BJ (cell line): ENCODE measurements at regions of chr7 and their contacts with region 1.

Region 1: GRCh38 chr7:121395961-121396757 is at the start of gene FAM3C:
- DNase-seq: peak; percentile 41
- H3K4me3 ChIP-seq: peak within 1 kb of the TSS; percentile 83
- H3K27me3 ChIP-seq: no peaks in the 10 kb centered on the region
- CTCF ChIP-seq: peak; percentile 41
- polyA plus RNA-seq, gene FAM3C: 13.1 and 32.0 TPM in 2 replicates

Region 2: GRCh38 chr7:121366852-121367431 is 29.2 kb before region 1 on chr7:
- CTCF ChIA-PET with region 1: interaction called, 12 read pairs
- POLR2A ChIA-PET with region 1: interaction called, 3 read pairs
- DNase-seq: no peak
- H3K4me3 ChIP-seq: no peak overlapping the region
- H3K27me3 ChIP-seq: no peaks in the 10 kb centered on the region
- CTCF ChIP-seq: peak; percentile 67

Region 3: DNA sequence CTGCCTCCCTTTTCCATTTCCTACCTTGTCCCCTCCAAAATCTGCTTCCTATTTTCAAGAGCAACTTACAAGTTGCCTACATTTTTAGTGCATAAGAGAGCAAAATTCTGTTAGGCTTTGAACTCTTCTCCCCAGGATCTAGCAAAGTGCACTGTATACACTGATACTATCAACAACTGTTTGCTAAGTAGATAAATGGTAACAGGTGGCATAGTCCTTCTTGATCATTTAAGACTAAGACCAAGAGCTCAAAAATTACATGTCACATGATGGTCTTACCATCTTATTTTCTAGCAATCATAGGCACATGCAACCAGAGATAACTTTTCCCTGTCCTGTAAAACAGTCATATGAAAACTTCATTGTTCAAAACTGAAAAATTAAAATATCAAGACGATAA is 16.2 kb before region 1 on chr7:
- CTCF ChIA-PET with region 1: interaction called, 14 read pairs
- POLR2A ChIA-PET with region 1: no interaction called
- DNase-seq: no peak
- H3K4me3 ChIP-seq: no peak overlapping the region
- H3K27me3 ChIP-seq: no peaks in the 10 kb centered on the region
- CTCF ChIP-seq: no peak

Region 4: GRCh38 chr7:121385800-121386179 is 10.4 kb before region 1 on chr7:
- CTCF ChIA-PET with region 1: interaction called, 16 read pairs
- POLR2A ChIA-PET with region 1: interaction called, 3 read pairs
- DNase-seq: no peak
- H3K4me3 ChIP-seq: no peak overlapping the region
- H3K27me3 ChIP-seq: no peaks in the 10 kb centered on the region
- CTCF ChIP-seq: no peak

Region 5: DNA sequence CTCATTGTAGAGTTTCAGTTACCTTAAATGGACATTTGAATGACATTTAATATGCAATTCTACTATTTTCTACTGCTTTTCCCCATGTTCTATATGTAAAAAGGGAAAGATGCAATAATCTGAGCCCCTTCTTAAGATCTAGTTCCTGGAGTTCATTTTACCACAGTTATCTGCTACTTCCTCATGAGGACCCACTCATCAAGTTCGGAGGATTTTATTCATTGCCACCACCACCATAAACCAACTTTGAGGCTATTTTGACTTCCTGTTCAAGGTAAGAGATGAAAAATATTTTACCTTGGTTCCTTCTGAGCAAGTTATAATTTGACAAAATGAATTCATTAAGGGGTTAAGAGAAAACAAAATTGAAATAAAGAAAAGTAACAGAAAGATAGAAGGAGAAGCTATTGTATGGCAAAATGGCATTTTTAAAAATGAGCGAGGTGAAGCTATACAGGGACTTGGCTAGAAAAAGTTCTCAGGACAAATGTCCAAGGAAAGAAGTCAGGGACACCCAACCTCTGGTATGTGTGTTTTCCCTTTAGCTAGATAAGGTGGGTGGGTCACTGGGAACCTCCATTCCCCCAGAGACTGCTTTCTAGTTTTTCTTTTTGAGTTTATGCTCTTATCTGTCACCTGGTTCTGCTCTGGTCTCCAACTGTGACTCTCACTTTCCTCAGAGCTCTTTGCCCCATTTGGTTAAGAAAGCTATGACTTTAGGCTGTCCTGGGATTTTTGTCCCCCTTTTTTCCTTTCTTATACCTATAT is 14.9 kb after region 1 on chr7:
- CTCF ChIA-PET with region 1: interaction called, 10 read pairs
- POLR2A ChIA-PET with region 1: interaction called, 7 read pairs
- DNase-seq: no peak
- H3K4me3 ChIP-seq: no peak overlapping the region
- H3K27me3 ChIP-seq: peaks cover 4% of the 10 kb centered on the region
- CTCF ChIP-seq: no peak

Region 6: DNA sequence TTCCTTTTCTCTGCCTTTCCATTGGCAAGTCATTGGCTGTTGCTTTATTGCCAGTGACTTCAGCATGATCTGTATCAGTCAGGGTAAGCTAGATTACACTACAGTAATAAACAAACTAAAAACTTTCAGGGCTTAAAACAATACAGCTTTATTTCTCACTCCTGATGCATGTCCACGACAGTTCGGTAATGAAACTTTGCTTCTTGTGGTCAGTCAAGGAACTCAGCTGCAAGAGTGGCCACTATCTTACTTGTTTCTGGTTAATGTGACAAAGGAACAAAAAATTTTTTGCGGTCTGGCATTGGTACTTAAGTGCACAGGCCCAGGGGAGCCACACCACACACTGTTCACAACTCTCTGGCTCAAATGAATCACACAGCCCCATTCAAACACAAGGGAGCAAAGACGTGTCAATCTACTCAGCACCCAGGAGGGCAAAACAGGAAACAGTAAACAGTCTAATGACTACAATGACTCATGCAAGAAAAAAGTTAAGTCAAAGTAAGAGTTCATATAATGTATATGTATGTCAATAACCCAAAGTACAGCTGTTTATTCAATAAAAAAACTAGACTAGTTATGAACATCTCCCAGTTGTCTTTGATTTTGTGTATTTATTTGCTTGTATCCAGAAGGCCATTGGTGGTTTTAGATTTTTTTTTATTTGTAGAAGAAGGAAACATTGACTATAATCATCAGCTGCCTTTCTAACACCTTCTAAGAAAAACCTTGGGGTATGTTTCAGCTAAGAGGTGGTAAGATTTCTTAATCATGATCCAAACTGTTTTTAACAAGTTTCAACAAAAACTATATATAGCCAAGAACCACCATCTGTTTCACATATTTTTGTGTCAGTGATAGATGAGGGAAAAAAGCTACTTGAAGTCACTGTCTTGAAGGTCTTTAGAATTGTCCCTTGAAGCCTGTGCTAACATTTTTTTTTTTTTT is 134.3 kb after region 1 on chr7:
- CTCF ChIA-PET with region 1: interaction called, 11 read pairs
- POLR2A ChIA-PET with region 1: no interaction called
- DNase-seq: peak; percentile 78
- H3K4me3 ChIP-seq: no peak overlapping the region
- H3K27me3 ChIP-seq: peaks cover 2% of the 10 kb centered on the region
- CTCF ChIP-seq: no peak

Region 7: DNA sequence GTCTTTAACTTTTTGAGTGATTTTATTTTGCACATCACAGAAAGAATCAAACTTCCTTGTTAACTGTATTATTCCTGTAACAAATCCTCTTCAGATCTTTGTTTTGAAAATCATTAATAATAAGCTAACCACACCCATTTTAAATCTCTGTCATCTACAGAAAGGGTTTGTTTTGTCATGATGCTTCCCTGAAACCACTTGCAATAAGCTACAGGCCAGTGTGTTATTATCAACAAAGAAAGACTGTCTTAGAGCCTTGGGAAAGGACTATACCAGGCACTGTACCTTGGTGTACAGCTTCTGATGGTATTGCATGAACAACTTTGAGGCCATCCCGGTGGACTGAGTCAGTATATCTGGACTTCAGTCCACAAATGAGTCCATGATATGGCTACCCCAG is 145.3 kb after region 1 on chr7:
- CTCF ChIA-PET with region 1: interaction called, 10 read pairs
- POLR2A ChIA-PET with region 1: no interaction called
- DNase-seq: no peak
- H3K4me3 ChIP-seq: no peak overlapping the region
- H3K27me3 ChIP-seq: no peaks in the 10 kb centered on the region
- CTCF ChIP-seq: no peak